A549 (cell line): ENCODE measurements at regions of chr9 and their contacts with region 1.

Region 1: DNA sequence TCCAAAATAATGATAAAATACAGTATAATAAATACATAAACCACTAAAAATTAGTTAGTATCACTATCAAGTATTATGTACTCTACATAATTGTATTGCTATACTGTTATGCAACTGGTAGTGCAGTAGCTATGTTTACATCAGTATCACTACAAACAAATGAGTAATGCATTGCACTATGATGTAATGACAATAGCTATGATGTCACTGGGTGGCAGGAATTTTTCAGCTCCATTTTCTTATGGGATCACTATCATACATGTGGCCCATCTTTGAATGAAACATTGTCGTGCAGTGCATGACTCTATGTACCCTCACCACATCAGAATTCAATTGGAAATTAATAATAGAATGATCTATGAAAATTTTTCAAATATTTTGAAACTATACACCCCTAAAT is 201.3 kb downstream of the MPDZ start:
- DNase-seq: no peak
- ATAC-seq: no peak
- H3K4me3 ChIP-seq: no peak overlapping the region
- H3K27ac ChIP-seq: no peak overlapping the region
- H3K4me1 ChIP-seq: no peaks in the 10 kb centered on the region
- CTCF ChIP-seq: no peak
- EP300 ChIP-seq: no peak
- POLR2A ChIP-seq: no peak
- RAD21 ChIP-seq: no peak

Region 2: GRCh38 chr9:12538842-12539579 is 539.2 kb before region 1 on chr9:
- CTCF ChIA-PET with region 1: no interaction called
- POLR2A ChIA-PET with region 1: no interaction called
- DNase-seq: no peak
- ATAC-seq: peak in 1 of 2 experiments; percentile 61; a peak in 2 of 6 replicates
- H3K4me3 ChIP-seq: no peak overlapping the region
- H3K27ac ChIP-seq: no peak overlapping the region
- H3K4me1 ChIP-seq: no peaks in the 10 kb centered on the region
- CTCF ChIP-seq: no peak
- EP300 ChIP-seq: no peak
- POLR2A ChIP-seq: no peak
- RAD21 ChIP-seq: no peak

Region 3: DNA sequence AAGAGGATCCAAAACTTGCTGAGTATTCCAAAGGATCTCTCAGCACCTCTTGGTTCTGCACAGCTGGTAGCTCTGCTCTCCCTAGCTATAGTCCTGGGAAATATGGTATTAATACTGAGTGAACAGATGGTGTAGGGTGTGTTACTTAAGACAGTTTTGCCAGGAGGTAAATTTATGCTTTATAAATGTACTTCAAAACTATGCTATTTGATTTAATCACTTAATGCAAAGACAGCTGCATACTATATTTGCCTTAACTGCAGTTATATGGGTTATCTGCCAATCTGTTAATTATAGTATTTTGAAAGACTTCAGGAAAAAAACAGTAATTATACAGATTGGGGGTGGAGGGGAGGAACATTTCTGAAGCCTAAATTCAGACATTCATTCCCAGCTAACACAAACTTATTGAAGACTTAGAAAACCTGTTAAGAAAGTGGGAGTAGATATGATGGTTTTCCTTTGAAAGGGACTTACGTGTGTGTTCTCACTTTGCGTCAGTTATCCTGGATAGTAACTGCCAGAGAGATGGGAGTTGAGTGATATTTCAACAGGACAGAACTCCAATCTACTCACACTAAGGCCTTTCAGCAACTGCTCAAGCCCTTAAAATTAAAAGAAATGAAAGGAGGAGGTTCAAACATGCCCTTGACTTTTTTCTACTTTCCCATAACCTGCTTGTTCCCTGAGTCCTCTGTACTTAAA is 14.0 kb before region 1 on chr9:
- CTCF ChIA-PET with region 1: no interaction called
- POLR2A ChIA-PET with region 1: no interaction called
- DNase-seq: no peak
- ATAC-seq: no peak
- H3K4me3 ChIP-seq: no peak overlapping the region
- H3K27ac ChIP-seq: no peak overlapping the region
- H3K4me1 ChIP-seq: no peaks in the 10 kb centered on the region
- CTCF ChIP-seq: no peak
- EP300 ChIP-seq: no peak
- POLR2A ChIP-seq: no peak
- RAD21 ChIP-seq: no peak

Region 4: GRCh38 chr9:13088720-13089427 is 10.7 kb after region 1 on chr9:
- CTCF ChIA-PET with region 1: interaction called, 18 read pairs
- POLR2A ChIA-PET with region 1: no interaction called
- DNase-seq: peak; percentile 57 to 70
- ATAC-seq: peak; percentile 86 to 91
- H3K4me3 ChIP-seq: 0 out of 3 replicates have a peak overlapping the region, but pooled peaks have one; percentile 11
- H3K27ac ChIP-seq: no peak overlapping the region
- H3K4me1 ChIP-seq: no peaks in the 10 kb centered on the region
- CTCF ChIP-seq: peak; percentile 89
- EP300 ChIP-seq: no peak
- POLR2A ChIP-seq: no peak
- RAD21 ChIP-seq: peak; percentile 78 to 84